ENCODE measurements at regions of chr1 and their contacts with region 1.

Region 1: DNA sequence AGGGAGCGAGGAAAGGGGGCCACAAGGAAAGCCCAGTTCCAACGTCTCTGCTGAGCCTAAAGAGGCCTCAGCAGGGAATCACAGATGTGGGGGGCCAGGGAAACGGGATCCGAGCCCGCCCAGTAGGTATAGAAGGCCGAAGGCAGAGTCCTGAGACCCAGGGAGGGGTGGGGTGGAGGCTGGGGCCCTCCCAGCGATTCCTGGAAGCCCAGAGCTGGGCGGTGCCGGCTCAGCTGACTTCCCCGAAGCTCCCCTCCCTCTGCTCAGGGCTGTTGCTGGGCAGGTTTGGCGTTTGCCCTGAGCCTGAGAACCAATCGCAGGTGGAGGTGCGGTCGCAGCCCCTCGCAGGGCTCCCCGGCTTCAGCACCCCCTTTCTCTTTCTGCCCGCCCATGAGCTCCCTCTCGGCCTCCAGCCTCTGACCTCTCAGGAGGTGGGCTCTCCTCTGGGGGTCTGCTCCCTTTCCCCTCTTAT is 12.8 kb downstream of the ADAMTSL4 start:
- DNase-seq: peak; percentile 86 to 89
- ATAC-seq: peak; percentile 62 to 72
- H3K4me3 ChIP-seq: peak overlapping the region; percentile 46
- H3K27ac ChIP-seq: peak overlapping the region; percentile 97 to 99
- H3K4me1 ChIP-seq: peaks cover 54% of the 10 kb centered on the region
- CTCF ChIP-seq: no peak
- EP300 ChIP-seq: peak in 1 of 2 experiments; percentile 44; a peak in 1 of 5 replicates
- POLR2A ChIP-seq: peak; percentile 30
- RAD21 ChIP-seq: no peak

Region 2: GRCh38 chr1:150486964-150487762 is 74.8 kb before region 1 on chr1 and contains the start of gene TARS2:
- CTCF ChIA-PET with region 1: interaction called, 19 read pairs
- POLR2A ChIA-PET with region 1: no interaction called
- DNase-seq: peak; percentile 93 to 99
- ATAC-seq: peak; percentile 99 to 100
- H3K4me3 ChIP-seq: peak within 1 kb of the TSS; percentile 71
- H3K27ac ChIP-seq: peak within 1 kb of the TSS; percentile 87 to 94
- H3K4me1 ChIP-seq: peaks cover 7% of the 10 kb centered on the region; the same call in 2 of the 3 replicates
- CTCF ChIP-seq: no peak
- EP300 ChIP-seq: no peak
- POLR2A ChIP-seq: peak; percentile 73
- RAD21 ChIP-seq: peak in 1 of 2 experiments; percentile 8; a peak in 1 of 5 replicates
- polyA plus RNA-seq, gene TARS2: 21.6 and 24.5 TPM in 2 replicates

Region 3: DNA sequence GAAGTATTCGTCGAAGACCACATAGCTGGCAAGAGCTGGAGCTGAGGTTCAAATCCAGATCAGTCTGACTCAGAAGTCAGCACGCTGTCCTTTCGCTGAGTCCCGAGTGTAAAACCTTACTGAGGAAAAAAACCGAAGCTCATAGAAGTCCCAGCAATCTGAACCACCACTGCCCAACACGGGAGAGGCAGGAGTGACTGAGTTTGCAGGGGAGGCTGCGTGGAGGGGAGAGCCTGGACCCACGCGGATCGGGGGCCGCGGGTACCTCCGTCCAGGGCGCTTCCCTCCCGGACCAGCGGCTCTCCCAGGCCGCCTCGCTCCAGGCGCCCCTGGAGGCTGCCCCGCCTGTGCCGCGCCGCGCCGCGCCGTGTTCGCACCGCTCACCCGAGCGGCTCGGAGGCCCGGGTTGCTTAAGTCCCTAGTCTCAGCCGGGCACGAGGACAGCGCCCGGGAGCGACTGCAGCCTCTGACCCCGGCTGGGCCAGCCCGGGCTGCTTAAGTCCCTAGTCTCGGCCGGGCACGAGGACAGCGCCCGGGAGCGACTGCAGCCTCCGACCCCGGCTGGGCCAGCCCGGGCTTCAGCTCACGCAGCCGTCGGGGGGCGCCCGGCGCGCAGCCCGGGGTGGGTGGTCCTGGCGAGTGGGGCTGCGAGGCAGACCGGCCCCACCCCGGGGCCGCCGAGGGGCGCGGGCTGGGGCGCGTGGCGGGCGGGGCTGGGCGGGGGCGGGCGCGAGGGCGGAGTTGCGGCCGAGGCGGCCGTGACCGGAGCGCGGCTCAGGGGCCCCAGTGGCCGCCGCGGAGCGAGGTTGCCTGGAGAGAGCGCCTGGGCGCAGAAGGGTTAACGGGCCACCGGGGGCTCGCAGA is 13.1 kb before region 1 on chr1 and contains the start of gene ADAMTSL4:
- CTCF ChIA-PET with region 1: interaction called, 102 read pairs
- POLR2A ChIA-PET with region 1: interaction called, 3 read pairs
- DNase-seq: peak; percentile 80
- ATAC-seq: peak; percentile 74 to 82
- H3K4me3 ChIP-seq: peak within 1 kb of the TSS; percentile 53
- H3K27ac ChIP-seq: peak within 1 kb of the TSS; percentile 75 to 92
- H3K4me1 ChIP-seq: peaks cover 17% of the 10 kb centered on the region
- CTCF ChIP-seq: no peak; the same call in 2 of the 3 replicates
- EP300 ChIP-seq: no peak
- POLR2A ChIP-seq: peak; percentile 36
- RAD21 ChIP-seq: no peak
- polyA plus RNA-seq, gene ADAMTSL4: 1.3 and 1.8 TPM in 2 replicates

Region 4: GRCh38 chr1:150606463-150607148 is 44.6 kb after region 1 on chr1:
- CTCF ChIA-PET with region 1: interaction called, 48 read pairs
- POLR2A ChIA-PET with region 1: interaction called, 16 read pairs
- DNase-seq: no peak
- ATAC-seq: no peak
- H3K4me3 ChIP-seq: no peak overlapping the region
- H3K27ac ChIP-seq: peak overlapping the region; percentile 89
- H3K4me1 ChIP-seq: peaks cover 49% of the 10 kb centered on the region
- CTCF ChIP-seq: no peak
- EP300 ChIP-seq: no peak
- POLR2A ChIP-seq: no peak
- RAD21 ChIP-seq: no peak

Region 5: DNA sequence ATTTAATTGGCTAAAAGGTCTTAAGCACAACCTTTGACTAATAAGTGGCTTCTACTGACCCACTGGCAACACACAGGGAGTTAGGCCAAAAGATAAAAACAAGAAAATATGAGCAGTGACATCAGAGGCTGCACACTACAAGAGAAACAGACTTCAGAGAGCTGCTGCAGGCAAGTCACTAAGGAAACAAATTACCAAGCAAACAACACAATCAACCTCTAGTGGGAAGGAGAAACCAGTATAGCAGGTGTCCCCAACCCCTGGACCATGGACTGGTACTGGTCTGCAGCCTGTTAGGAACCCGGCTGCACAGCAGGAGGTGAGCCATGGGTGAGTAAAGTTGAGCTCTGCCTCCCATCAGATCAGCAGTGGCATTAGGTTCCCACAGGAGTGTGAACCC is 88.2 kb after region 1 on chr1:
- CTCF ChIA-PET with region 1: interaction called, 18 read pairs
- POLR2A ChIA-PET with region 1: no interaction called
- DNase-seq: no peak
- ATAC-seq: no peak
- H3K4me3 ChIP-seq: no peak overlapping the region
- H3K27ac ChIP-seq: no peak overlapping the region
- H3K4me1 ChIP-seq: peaks cover 4% of the 10 kb centered on the region; the same call in 1 of the 3 replicates
- CTCF ChIP-seq: no peak
- EP300 ChIP-seq: no peak
- POLR2A ChIP-seq: no peak
- RAD21 ChIP-seq: no peak

Region 6: DNA sequence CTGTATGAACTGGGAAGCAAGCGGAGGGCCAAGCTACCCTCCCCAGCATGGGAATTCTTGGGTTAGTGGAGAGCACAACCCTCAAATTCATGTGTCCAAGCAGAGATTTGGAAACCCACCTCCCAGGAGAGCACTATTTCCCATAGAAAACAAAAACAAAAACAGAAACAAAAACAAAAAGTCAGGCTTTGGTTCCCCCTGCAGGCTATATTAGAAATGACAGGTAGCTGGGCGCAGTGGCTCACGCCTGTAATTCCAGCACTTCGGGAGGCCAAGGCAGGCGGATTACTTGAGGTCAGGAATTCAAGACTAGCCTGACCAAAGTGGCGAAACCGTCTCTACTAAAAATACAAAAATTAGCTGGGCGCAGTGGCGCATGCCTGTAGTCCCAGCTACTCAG is 433.9 kb after region 1 on chr1:
- CTCF ChIA-PET with region 1: interaction called, 12 read pairs
- POLR2A ChIA-PET with region 1: no interaction called
- DNase-seq: no peak
- ATAC-seq: peak in 1 of 2 experiments; percentile 76; a peak in 3 of 6 replicates
- H3K4me3 ChIP-seq: no peak overlapping the region
- H3K27ac ChIP-seq: no peak overlapping the region
- H3K4me1 ChIP-seq: 0 out of 3 replicates have a peak, but pooled peaks cover 4% of the 10 kb centered on the region
- CTCF ChIP-seq: peak; percentile 89
- EP300 ChIP-seq: no peak
- POLR2A ChIP-seq: no peak
- RAD21 ChIP-seq: peak; percentile 75 to 86

Measured in A549 (cell line).